Common myeloid progenitor, CD34-positive (primary cell): ENCODE measurements at regions of chr19 and their contacts with region 1.

Region 1: GRCh38 chr19:55681131-55682087 is 6.4 kb downstream of the EPN1 start:
- DNase-seq: no peak
- H3K4me3 ChIP-seq: no peak overlapping the region
- H3K27ac ChIP-seq: no peak overlapping the region
- H3K4me1 ChIP-seq: peaks cover 4 to 23% (median 21%) of the 10 kb centered on the region in 4 experiments
- H3K27me3 ChIP-seq: no peaks in the 10 kb centered on the region

Region 2: DNA sequence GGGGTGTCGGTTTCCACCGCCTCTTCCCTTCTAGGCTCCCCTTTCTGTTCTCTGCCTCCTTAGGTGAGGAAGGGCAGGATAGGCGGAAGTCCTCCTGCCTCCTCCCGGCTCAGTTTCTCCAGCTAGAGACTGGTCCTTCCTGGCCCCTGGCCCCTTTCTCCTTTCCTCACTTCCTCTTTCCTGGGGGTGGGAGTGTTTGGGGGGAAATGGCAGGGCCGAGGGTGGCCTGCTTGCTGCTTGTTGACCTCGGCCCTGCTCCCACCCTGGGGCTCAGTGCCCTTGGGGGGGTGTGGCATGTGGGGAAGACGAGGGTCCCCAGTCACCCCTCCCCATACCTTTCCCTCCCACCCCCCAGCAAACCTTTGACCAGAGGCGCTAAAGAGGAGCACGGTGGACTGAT is 21.6 kb before region 1 on chr19:
- CTCF ChIA-PET with region 1: no interaction called
- POLR2A ChIA-PET with region 1: no interaction called
- DNase-seq: no peak
- H3K4me3 ChIP-seq: no peak overlapping the region
- H3K27ac ChIP-seq: peak overlapping the region; percentile 33 to 69
- H3K4me1 ChIP-seq: peaks cover 18 to 44% (median 34%) of the 10 kb centered on the region in 4 experiments
- H3K27me3 ChIP-seq: no peaks in the 10 kb centered on the region

Region 3: DNA sequence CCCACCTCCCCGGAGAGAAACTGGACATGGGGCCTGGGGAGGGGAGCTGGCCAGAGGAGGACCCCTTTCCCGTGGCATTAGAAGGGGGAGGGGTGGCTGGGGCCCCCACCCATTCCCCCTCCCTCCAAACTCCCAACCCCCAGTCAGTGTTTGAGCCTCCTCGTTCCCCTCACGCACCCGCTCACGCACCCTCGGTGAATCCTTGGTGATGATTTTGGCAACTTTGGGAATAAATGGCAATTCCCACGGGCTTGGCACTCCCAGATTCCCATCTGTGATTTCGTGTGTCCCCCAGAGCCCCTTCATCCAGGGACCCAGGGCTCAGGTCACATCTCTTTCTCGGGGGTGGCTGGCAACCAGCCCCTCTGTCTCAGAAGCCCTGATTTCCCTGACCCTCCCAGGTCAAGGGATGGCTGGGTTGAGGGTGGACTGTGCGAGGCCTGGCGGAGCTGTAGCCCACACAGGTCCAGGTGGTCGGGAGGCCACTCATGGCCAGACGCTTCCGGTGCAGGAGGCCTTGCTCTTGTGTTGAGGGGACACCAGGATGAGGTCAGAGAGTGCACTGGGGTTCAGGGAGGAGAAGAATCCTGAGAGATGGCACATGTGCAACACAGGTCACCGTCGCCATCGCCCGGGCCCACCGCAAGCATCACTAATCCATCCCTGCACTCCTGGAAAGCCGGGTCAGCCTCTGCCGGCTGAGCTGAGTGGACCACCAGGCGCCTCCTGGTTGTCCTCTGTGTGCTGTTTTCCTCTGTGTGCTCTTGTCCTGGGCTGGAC is 14.3 kb after region 1 on chr19:
- CTCF ChIA-PET with region 1: interaction called, 3 read pairs
- POLR2A ChIA-PET with region 1: interaction called, 11 read pairs
- DNase-seq: no peak
- H3K4me3 ChIP-seq: no peak overlapping the region
- H3K27ac ChIP-seq: no peak overlapping the region
- H3K4me1 ChIP-seq: no peaks in the 10 kb centered on the region
- H3K27me3 ChIP-seq: no peaks in the 10 kb centered on the region